Transverse colon (tissue), 4 donors: ENCODE measurements at regions of chr6 and their contacts with region 1.

Region 1: DNA sequence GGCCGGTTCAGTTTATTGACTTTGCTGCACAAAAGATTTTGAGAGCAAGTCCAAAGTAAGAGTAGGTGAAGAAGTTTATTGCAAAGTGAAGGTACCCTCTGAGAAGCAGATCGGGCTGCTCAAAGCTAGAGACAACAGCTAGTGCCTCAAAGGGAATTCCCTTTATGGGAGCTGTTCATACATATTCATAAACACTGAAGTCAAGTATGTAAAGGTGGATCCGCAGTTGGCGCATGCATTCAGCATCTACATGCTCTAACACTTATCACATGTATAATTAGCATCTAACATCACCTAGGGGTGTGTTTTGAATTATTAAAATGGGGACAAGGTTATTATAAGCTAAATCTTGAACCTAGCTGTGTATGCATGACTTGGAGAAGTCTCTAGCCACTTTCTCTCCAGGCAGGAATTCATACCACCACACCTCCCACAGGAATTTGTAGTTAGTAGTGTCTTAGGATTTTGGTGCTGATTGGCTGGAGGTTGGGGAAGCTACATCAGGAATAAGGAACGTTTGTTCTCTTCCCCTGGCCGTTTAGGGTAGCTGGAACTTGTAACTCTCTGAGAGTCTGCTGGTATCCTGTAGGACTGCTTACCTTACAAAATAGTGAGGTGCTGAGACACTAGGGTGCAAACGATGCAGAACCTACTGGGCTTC is 1633.9 kb downstream of the GRIK2 start:
- DNase-seq: no peak
- H3K4me3 ChIP-seq: no peak overlapping the region
- H3K27ac ChIP-seq: no peak overlapping the region
- H3K4me1 ChIP-seq: no peaks in the 10 kb centered on the region
- H3K27me3 ChIP-seq: no peaks in the 10 kb centered on the region
- CTCF ChIP-seq: no peak
- EP300 ChIP-seq: no peak
- POLR2A ChIP-seq: no peak

Region 2: GRCh38 chr6:102885165-102885564 is 142.2 kb before region 1 on chr6:
- in situ Hi-C with region 1: no loop called
- intact Hi-C with region 1: no loop called
- DNase-seq: no peak
- H3K4me3 ChIP-seq: no peak overlapping the region
- H3K27ac ChIP-seq: no peak overlapping the region
- H3K4me1 ChIP-seq: no peaks in the 10 kb centered on the region
- H3K27me3 ChIP-seq: no peaks in the 10 kb centered on the region
- CTCF ChIP-seq: no peak
- EP300 ChIP-seq: no peak
- POLR2A ChIP-seq: no peak

Region 3: GRCh38 chr6:104606361-104606760 is 1579.0 kb after region 1 on chr6:
- in situ Hi-C with region 1: no loop called
- intact Hi-C with region 1: loop called (anchors 5 kb)
- DNase-seq: peak; percentile 8
- H3K4me3 ChIP-seq: no peak overlapping the region
- H3K27ac ChIP-seq: no peak overlapping the region
- H3K4me1 ChIP-seq: peaks cover 0 to 13% (median 2%) of the 10 kb centered on the region in 4 donors
- H3K27me3 ChIP-seq: no peaks in the 10 kb centered on the region
- CTCF ChIP-seq: no peak
- EP300 ChIP-seq: no peak
- POLR2A ChIP-seq: no peak